Naive thymus-derived CD4-positive, alpha-beta T cell (primary cell): ENCODE measurements at regions of chr1 and their contacts with region 1.

Region 1: DNA sequence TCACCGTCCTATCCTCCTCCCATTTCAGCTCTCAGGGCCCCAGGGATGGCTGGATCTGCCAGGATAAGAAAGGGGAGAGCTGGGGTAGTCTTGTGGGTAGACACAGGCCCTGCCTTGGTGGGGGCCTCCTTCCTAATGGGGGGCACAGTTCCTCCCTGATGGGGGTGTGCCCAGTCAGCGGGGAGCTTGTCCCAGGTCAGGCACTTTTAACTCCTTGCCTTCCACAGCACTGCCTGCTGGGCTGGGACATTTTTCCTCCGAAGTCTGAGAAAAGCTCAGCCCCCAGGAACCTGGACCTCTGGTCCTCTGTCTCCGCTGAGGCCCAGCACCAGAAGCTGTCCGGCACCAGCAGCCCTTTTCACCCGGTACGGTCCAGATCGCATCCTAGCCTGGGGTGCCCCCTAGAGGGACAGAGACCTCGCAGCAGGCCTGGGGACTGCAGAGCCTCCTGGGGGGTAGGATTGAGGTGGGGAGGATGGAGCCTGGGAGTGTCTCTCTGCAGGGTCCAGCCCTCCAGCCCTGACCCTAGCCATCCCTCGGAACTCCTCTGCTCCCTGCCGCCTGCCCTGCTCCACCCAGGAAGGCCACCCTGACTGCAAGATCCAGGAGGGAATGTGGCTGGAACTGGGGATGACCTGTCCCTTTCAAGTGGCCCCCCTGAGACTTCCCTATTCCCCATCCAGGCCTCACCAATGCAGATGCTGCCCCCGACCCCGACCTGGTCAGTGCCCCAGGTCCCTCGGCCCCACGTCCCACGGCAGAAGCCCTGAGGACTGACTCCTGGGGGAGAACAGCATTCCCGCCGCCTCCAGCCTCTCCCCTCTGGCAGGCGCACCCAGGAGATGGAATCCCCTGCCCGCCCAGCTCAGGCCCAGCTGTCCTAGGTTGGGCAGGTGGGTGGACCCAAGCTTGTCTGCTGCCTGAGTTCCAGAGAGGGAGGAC is 12.0 kb downstream of the MIIP start:
- DNase-seq: peak in 4 of 9 donors; percentile 16 to 51 (median 24)
- ATAC-seq: peak; percentile 57
- H3K4me3 ChIP-seq: no peak overlapping the region
- H3K4me3 Mint-ChIP-seq: no peak overlapping the region
- H3K27ac ChIP-seq: no peak overlapping the region
- H3K27ac Mint-ChIP-seq: no peak overlapping the region
- H3K4me1 ChIP-seq: no peaks in the 10 kb centered on the region
- H3K4me1 Mint-ChIP-seq: peaks cover 0 to 13% (median 0%) of the 10 kb centered on the region in 7 donors
- H3K27me3 ChIP-seq: no peaks in the 10 kb centered on the region
- H3K27me3 Mint-ChIP-seq: no peaks in the 10 kb centered on the region

Region 2: DNA sequence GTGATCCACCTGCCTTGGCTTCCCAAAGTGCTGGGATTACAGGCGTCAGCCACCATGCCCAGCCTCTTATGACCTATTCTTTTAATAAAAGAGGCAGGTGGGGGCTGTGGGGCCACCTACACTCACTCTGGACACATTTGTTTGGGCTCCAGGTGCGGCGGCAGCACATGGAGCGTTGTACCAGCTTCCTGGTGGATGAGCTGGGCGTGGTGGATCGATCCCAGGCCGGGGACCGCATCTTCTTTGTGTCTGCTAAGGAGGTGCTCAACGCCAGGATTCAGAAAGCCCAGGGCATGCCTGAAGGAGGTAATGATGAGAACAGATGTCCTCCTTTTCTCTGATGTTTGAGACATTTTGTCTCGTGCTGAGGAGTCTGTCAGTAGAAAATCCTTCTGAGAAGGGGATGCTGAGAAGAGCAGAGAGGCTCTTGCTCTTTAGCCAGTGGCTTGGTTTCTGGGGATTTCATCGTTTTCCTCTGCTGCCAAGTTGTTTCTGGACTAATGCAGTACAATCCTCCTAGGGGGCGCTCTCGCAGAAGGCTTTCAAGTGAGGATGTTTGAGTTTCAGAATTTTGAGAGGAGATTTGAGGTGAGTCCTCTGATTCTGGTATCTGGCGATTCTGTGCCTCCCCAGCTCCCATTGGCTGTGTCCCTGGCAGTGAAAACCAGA is 29.9 kb before region 1 on chr1:
- CTCF ChIA-PET with region 1: no interaction called
- POLR2A ChIA-PET with region 1: no interaction called
- intact Hi-C with region 1: loop called in 1 of 2 experiments (anchors 2 kb)
- DNase-seq: peak in 3 of 9 donors; percentile 13 to 51 (median 23)
- ATAC-seq: no peak
- H3K4me3 ChIP-seq: no peak overlapping the region
- H3K4me3 Mint-ChIP-seq: no peak overlapping the region
- H3K27ac ChIP-seq: no peak overlapping the region
- H3K27ac Mint-ChIP-seq: peak overlapping the region in 1 of 9 donors; percentile 23
- H3K4me1 ChIP-seq: no peaks in the 10 kb centered on the region
- H3K4me1 Mint-ChIP-seq: peaks cover 0 to 11% (median 0%) of the 10 kb centered on the region in 7 donors
- H3K27me3 ChIP-seq: no peaks in the 10 kb centered on the region
- H3K27me3 Mint-ChIP-seq: no peaks in the 10 kb centered on the region